Activated CD8-positive, alpha-beta T cell treated with anti-CD3 and anti-CD28 coated beads for 36 hours (primary cell): ENCODE measurements at regions of chr10 and their contacts with region 1.

Region 1: DNA sequence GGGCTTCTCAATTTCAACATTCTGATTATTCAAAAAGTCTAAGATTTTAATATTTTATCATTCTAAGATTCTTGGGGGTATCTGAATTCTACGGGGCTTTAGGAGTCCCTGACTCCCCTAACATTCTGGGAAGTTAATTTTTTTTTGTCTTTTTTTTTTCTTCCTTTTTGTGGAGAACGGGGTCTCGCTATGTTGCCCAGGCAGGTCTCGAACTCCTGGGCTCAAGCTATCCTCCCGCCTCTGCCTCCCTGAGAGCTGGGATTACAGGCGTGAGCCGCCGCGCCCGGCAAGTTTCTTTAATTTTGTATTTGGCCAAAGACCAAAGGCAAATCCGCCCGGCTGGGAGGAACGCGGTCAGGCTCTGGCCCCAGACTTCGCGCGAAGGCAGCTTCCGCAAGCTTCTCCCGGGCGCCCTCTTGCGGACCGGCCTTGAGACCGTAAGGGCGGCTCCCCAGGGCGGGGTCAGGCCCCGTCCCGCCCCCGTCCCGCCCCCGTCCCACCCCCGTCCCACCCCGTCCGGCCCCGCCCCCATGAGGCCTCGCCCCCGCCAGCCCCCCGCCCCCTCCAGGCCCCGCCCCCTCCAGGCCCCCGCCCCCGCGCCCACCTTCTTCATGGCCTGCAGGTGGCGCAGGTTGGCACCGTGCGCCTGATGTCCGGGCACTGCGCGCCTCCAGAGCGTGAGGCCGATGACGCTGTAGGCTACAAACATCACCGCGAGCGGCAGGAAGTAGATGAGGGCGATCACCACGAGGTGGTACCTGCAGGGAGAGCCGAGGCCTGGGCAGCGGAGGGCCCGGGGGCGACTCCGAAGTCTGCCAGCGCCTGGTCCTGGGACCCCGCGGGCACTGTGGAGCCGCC is 8.2 kb downstream of the TACR2 start:
- DNase-seq: peak; percentile 94
- ATAC-seq: peak; percentile 89
- H3K4me3 Mint-ChIP-seq: peak overlapping the region; percentile 47
- H3K27ac Mint-ChIP-seq: peak overlapping the region; percentile 80
- H3K4me1 Mint-ChIP-seq: peaks cover 24% of the 10 kb centered on the region
- H3K27me3 Mint-ChIP-seq: no peaks in the 10 kb centered on the region
- CTCF ChIP-seq: peak; percentile 82

Region 2: DNA sequence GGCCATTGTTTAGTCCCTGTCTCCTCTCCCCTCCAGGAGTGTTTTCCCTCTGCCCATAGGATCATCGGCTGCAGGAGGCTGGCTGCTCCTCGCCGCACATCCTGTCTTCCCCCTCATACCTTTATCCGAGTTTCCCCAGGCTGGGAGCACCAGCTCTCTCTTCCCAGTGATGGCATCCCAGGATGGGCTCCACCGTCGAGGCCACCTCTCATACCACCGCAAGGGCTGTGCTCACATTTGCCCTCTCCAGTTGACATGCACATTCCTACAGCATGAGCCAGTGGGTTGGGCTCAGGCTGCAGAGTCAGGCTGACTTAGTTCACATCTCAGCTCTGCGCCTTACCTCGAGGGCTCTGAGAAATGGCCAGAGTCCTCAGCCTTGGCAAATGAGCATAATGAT is 176.3 kb before region 1 on chr10:
- CTCF ChIA-PET with region 1: interaction called, 37 read pairs
- POLR2A ChIA-PET with region 1: interaction called, 3 read pairs
- intact Hi-C with region 1: no loop called
- DNase-seq: no peak
- ATAC-seq: no peak
- H3K4me3 Mint-ChIP-seq: no peak overlapping the region
- H3K27ac Mint-ChIP-seq: no peak overlapping the region
- H3K4me1 Mint-ChIP-seq: peaks cover 40% of the 10 kb centered on the region
- H3K27me3 Mint-ChIP-seq: no peaks in the 10 kb centered on the region
- CTCF ChIP-seq: no peak

Region 3: GRCh38 chr10:69318106-69318866 is 90.3 kb before region 1 on chr10:
- CTCF ChIA-PET with region 1: interaction called, 11 read pairs
- POLR2A ChIA-PET with region 1: interaction called, 7 read pairs
- intact Hi-C with region 1: no loop called
- DNase-seq: peak; percentile 93
- ATAC-seq: peak; percentile 86
- H3K4me3 Mint-ChIP-seq: peak overlapping the region; percentile 87
- H3K27ac Mint-ChIP-seq: peak overlapping the region; percentile 92
- H3K4me1 Mint-ChIP-seq: peaks cover 51% of the 10 kb centered on the region
- H3K27me3 Mint-ChIP-seq: no peaks in the 10 kb centered on the region
- CTCF ChIP-seq: no peak

Region 4: GRCh38 chr10:69362468-69362954 is 46.0 kb before region 1 on chr10:
- CTCF ChIA-PET with region 1: no interaction called
- POLR2A ChIA-PET with region 1: no interaction called
- intact Hi-C with region 1: no loop called
- DNase-seq: no peak
- ATAC-seq: no peak
- H3K4me3 Mint-ChIP-seq: no peak overlapping the region
- H3K27ac Mint-ChIP-seq: peak overlapping the region; percentile 5
- H3K4me1 Mint-ChIP-seq: peaks cover 37% of the 10 kb centered on the region
- H3K27me3 Mint-ChIP-seq: no peaks in the 10 kb centered on the region
- CTCF ChIP-seq: no peak

Region 5: DNA sequence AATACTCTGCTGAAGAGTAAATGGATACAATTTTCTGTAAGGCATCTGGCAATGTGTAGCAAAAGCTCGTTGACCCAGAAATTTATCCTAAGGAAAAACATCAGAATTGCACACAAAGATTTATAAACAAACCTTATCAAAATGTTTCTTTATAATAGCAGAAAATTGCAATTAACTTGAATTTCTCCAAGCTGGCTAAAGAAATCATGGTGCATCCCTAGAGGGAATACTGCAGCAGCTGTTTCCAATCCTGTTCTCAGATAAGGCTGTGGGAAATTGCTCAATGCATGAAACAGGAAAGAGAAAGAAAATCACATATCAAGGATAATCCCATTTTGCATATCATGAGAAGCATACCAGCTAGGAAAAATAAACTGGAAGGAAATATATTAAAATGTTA is 10.6 kb before region 1 on chr10:
- CTCF ChIA-PET with region 1: interaction called, 24 read pairs
- POLR2A ChIA-PET with region 1: interaction called, 4 read pairs
- intact Hi-C with region 1: no loop called
- DNase-seq: no peak
- ATAC-seq: no peak
- H3K4me3 Mint-ChIP-seq: no peak overlapping the region
- H3K27ac Mint-ChIP-seq: no peak overlapping the region
- H3K4me1 Mint-ChIP-seq: no peaks in the 10 kb centered on the region
- H3K27me3 Mint-ChIP-seq: no peaks in the 10 kb centered on the region
- CTCF ChIP-seq: no peak

Region 6: DNA sequence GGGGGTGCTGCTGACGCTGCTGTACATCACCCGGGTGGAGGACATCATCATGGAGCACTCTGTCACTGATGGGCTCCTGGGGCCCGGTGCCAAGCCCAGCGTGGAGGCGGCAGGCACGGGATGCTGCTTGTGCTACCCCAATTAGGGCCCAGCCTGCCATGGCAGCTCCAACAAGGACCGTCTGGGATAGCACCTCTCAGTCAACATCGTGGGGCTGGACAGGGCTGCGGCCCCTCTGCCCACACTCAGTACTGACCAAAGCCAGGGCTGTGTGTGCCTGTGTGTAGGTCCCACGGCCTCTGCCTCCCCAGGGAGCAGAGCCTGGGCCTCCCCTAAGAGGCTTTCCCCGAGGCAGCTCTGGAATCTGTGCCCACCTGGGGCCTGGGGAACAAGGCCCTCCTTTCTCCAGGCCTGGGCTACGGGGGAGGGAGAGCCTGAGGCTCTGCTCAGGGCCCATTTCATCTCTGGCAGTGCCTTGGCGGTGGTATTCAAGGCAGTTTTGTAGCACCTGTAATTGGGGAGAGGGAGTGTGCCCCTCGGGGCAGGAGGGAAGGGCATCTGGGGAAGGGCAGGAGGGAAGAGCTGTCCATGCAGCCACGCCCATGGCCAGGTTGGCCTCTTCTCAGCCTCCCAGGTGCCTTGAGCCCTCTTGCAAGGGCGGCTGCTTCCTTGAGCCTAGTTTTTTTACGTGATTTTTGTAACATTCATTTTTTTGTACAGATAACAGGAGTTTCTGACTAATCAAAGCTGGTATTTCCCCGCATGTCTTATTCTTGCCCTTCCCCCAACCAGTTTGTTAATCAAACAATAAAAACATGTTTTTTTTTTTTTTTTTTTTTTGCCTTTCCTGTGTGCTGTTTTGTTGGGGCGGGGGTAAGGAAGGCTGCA is 98.5 kb after region 1 on chr10:
- CTCF ChIA-PET with region 1: interaction called, 22 read pairs
- POLR2A ChIA-PET with region 1: interaction called, 3 read pairs
- intact Hi-C with region 1: loop called (anchors 5 kb)
- DNase-seq: peak; percentile 10
- ATAC-seq: peak; percentile 15
- H3K4me3 Mint-ChIP-seq: peak overlapping the region; percentile 26
- H3K27ac Mint-ChIP-seq: peak overlapping the region; percentile 78
- H3K4me1 Mint-ChIP-seq: peaks cover 10% of the 10 kb centered on the region
- H3K27me3 Mint-ChIP-seq: peaks cover 1% of the 10 kb centered on the region
- CTCF ChIP-seq: no peak